Sciatic nerve (tissue), 2 donors: ENCODE measurements at regions of chr1 and their contacts with region 1.

Region 1: DNA sequence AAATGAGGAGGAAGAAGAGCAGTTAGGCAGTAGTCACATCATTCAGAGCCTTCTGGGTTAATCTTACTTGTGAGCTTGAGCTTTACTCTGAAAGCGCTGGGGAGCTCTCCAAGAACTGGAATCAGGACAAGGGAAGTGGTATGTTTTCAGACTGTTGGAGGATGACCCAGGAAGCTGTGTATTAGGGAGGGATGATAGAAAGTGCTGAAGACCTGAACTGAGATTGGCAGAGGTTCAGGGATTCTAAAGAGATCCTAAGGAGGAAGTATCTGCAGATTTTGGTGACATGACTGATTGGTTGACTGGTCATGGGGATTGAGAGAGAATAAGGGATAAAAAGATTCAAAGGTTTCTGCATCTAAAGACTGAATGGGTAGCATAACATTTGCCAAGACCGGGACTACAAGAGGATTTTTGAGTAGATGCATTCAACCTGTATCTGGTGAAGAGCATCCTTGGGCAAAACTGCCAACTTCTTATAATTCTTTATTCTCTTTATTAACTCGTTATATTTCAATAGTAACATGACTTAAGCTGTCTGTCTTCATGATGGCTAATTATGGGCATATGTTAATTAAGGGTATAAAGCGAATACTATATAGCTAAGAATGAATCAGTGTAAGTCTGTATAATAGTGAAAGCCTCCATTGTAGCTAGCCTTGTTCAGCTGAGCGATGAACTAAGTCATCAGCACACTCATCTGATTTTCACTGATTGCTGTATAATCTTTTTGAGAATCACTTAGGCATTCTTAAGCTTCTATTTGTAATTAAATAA is 41.8 kb downstream of the XCL1 start:
- DNase-seq: no peak
- ATAC-seq: no peak

Region 2: GRCh38 chr1:167342846-167343245 is 1275.3 kb before region 1 on chr1:
- intact Hi-C with region 1: no loop called
- DNase-seq: no peak
- ATAC-seq: no peak

Region 3: DNA sequence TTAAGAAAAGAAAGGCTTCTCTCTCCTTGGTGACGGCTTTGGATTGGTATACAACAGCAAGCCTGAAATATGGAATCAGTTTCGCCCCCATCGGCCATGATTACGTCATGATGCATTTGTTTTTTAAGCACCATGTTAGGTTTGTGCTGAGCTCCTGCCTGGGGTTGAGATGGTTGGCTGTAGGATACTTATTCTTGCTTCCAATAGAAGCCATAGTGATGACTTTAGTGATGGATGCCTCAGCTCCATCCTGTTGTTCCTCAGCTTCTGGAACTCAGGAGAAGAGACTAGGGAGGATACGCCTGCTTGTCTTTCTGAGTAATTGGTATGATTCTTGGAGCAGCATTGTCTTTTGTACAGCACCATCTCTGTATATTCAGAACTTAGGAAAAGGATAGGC is 27.1 kb before region 1 on chr1:
- intact Hi-C with region 1: no loop called
- DNase-seq: no peak
- ATAC-seq: no peak

Region 4: DNA sequence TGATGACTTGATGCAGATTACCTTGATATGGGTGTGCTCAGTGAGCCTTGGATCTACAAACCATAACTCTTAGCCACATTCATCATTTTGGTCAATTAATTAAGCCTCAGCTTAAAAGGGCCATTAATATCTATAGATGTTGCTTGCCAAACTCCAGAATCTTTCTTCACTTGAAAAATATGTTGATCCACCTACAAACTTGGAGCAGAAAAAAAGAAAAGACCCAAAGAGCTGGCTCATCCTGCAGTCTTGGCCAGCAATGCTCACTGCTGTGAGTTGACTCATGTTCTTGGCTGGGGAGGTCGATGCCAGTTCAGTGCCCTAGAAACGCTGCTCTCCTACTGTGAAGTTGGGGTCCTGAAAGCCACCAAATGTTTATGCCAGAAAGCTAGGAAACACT is 35.4 kb after region 1 on chr1:
- intact Hi-C with region 1: no loop called
- DNase-seq: no peak
- ATAC-seq: no peak

Region 5: GRCh38 chr1:169044296-169044695 is 426.1 kb after region 1 on chr1:
- intact Hi-C with region 1: loop called (anchors 5 kb)
- DNase-seq: no peak
- ATAC-seq: peak; percentile 79